HCT116 (cell line): ENCODE measurements at regions of chr10 and their contacts with region 1.

Region 1: DNA sequence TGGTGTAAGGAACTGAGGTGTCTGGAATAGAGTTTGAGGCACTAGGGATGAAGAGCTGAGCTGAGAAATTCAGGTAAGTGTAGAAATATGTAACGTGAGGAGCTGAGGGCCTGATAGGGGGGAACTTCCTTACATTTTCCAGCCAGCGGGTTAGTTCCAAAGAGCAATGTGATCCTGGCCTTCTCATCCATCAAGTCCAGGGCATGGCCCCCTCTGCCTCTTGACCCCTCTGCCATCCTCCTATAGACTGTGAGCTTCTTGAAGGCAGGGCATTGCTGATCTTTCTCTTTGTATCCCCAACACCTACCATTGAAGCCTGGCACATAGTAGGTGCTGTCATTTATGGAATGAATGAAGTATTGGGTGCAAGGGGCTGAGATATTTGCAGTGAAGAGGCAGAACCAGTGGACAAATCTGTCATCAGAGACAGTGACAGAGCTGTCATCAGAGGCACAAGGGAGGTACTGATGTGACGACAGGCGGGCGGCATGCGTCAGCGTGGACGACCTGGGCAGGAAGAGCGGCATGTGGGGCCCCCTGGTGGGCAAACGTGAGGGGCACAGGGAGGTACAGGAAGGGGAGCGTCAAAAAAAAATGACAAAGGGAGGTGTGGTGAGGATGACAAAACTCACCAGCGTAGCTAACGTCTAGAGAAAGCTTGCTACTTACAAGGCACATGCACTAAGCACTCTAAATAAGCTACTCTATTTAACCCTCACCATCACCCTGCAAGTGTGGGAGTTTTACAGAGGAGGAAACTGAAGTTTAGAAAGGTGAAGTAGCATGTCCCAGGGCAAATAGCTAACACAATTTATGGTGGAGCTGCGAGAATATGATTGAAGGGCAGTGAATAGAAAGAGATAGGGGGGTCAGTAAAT is 5.2 kb upstream of the CAMK2G start:
- DNase-seq: peak; percentile 81
- ATAC-seq: peak; percentile 90
- H3K4me3 ChIP-seq: no peak overlapping the region
- H3K27ac ChIP-seq: no peak overlapping the region
- H3K4me1 ChIP-seq: peaks cover 29 to 53% of the 10 kb centered on the region in 2 experiments
- H3K27me3 ChIP-seq: no peaks in the 10 kb centered on the region
- CTCF ChIP-seq: peak in 2 of 3 experiments; percentile 93 to 97; a peak in 4 of 6 replicates
- POLR2A ChIP-seq: no peak
- RAD21 ChIP-seq: no peak

Region 2: DNA sequence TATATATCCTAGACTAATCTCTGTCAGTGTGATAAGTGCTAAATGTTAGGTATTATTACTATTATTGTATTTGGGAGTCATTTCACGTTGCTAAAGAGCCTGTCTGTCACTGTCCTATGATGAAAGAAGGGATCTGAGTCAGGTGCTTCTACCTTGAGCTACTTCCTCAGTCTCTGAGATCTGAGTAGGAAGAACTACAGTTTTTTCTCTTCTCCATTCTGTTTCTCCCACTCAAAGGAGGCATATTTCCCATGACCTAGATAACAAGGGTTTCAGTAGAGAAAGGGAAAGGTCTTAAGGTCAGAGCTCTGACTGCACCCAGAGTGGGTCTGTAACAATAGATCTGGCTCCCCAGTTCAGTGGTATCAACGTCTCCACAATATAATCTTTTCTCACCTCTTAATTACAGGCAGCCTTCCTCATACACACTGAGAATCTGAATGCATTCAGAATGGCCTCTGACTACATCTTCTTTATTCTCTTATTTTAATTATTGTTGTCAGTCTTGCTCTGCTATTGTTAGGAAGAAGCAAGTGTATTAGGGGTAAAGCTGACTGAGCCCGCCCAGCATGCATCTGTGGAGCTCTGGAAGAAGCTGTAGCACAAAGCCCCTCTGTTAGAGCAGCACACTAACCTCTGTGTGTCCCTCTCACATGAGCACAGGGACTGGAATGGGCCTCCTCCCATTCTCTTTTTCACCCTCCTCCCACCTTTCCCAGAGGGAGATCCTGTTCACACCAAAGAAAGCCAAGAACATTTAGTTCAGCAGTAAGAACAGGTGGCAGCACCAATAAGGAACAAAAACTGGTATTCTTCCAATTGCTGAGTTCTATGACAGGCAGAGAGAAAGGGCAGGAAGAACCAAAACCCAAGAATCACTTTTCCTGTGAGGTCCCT is 326.5 kb before region 1 on chr10:
- CTCF ChIA-PET with region 1: no interaction called
- POLR2A ChIA-PET with region 1: no interaction called
- RAD21 ChIA-PET with region 1: no interaction called
- intact Hi-C with region 1: no loop called
- DNase-seq: no peak
- ATAC-seq: no peak
- H3K4me3 ChIP-seq: no peak overlapping the region
- H3K27ac ChIP-seq: no peak overlapping the region
- H3K4me1 ChIP-seq: no peaks in the 10 kb centered on the region; a peak in 1 of 4 replicates
- H3K27me3 ChIP-seq: no peaks in the 10 kb centered on the region
- CTCF ChIP-seq: no peak
- POLR2A ChIP-seq: no peak
- RAD21 ChIP-seq: no peak

Region 3: DNA sequence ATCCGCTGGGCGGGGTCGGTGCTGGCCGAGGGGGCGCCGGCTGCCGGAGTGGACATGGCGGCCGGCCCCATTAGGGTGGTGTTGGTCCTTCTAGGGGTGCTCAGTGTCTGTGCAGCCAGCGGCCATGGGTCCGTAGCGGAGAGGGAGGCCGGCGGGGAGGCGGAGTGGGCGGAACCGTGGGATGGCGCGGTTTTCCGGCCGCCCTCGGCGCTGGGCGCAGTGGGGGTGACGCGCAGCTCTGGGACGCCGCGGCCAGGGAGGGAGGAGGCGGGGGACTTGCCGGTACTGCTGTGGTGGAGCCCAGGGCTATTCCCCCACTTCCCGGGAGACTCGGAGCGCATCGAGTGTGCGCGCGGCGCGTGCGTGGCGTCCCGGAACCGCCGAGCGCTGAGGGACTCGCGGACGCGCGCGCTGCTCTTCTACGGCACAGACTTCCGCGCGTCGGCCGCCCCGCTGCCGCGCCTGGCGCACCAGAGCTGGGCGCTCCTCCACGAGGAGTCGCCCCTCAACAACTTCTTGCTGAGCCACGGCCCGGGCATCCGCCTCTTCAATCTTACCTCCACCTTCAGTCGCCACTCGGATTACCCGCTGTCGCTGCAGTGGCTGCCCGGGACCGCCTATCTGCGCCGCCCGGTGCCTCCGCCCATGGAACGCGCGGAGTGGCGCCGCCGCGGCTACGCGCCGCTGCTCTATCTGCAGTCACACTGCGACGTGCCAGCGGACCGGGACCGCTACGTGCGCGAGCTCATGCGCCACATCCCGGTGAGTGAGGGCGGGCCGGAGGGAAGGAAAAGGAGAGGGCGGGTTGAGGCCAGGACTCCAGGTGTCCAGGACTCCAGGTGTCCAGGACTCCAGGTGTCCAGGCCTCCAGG is 107.0 kb before region 1 on chr10:
- CTCF ChIA-PET with region 1: interaction called, 7 read pairs
- POLR2A ChIA-PET with region 1: interaction called, 3 read pairs
- RAD21 ChIA-PET with region 1: no interaction called
- intact Hi-C with region 1: loop called (anchors 5 kb)
- DNase-seq: peak; percentile 52
- ATAC-seq: peak; percentile 82
- H3K4me3 ChIP-seq: peak overlapping the region; percentile 66 to 83
- H3K27ac ChIP-seq: peak overlapping the region; percentile 97
- H3K4me1 ChIP-seq: peaks cover 9 to 25% of the 10 kb centered on the region in 2 experiments
- H3K27me3 ChIP-seq: no peaks in the 10 kb centered on the region
- CTCF ChIP-seq: no peak; a peak in 1 of 6 replicates
- POLR2A ChIP-seq: peak; percentile 49
- RAD21 ChIP-seq: 0 out of 2 replicates have a peak, but pooled peaks have one; percentile 24

Region 4: GRCh38 chr10:73848821-73849489 is 30.6 kb before region 1 on chr10:
- CTCF ChIA-PET with region 1: interaction called, 17 read pairs
- POLR2A ChIA-PET with region 1: interaction called, 4 read pairs
- RAD21 ChIA-PET with region 1: interaction called in 1 of 2 experiments, 4 read pairs
- intact Hi-C with region 1: loop called (anchors 1 kb)
- DNase-seq: peak; percentile 47
- ATAC-seq: peak; percentile 98
- H3K4me3 ChIP-seq: no peak overlapping the region
- H3K27ac ChIP-seq: no peak overlapping the region
- H3K4me1 ChIP-seq: no peaks in the 10 kb centered on the region
- H3K27me3 ChIP-seq: no peaks in the 10 kb centered on the region
- CTCF ChIP-seq: peak; percentile 90 to 99 (median 99)
- POLR2A ChIP-seq: no peak
- RAD21 ChIP-seq: peak; percentile 98

Region 5: DNA sequence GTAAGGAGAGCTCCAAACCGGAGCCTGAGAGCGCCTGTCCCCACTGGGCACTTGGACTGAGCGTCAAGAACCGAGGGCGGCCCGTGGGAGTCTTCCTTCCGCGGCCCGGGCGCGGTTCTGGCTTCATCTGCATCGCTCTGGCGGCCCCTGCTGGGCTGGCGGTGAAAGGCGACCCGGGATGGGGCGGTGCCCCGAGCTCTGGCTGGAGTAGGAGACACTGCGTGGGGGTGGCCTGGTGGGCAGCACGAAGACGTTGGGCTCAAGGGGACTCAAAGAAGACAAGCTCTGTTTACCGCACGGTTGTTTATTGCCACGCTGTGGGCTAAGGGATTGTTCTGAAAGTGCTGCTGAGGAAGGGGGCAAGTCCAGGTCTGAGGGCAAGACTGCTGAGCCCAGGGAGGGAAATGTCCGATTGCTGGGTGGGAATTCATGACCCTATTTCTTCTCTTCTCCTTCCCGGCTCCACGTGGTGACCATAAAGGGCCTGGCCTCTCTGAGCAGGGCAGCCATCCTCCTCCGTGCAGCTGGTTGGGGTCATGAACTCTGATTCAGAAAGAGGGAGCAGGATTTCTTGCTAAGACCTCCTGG is 61.2 kb after region 1 on chr10:
- CTCF ChIA-PET with region 1: interaction called, 142 read pairs
- POLR2A ChIA-PET with region 1: no interaction called
- RAD21 ChIA-PET with region 1: interaction called, 4 to 9 read pairs
- intact Hi-C with region 1: no loop called
- DNase-seq: peak; percentile 37
- ATAC-seq: peak; percentile 97
- H3K4me3 ChIP-seq: peak overlapping the region in 1 of 2 experiments; percentile 31; a peak in 2 of 4 replicates
- H3K27ac ChIP-seq: peak overlapping the region; percentile 7; the same call in 1 of the 2 replicates
- H3K4me1 ChIP-seq: peaks cover 11 to 43% of the 10 kb centered on the region in 2 experiments
- H3K27me3 ChIP-seq: no peaks in the 10 kb centered on the region
- CTCF ChIP-seq: peak; percentile 90 to 95 (median 93); a peak in 5 of 6 replicates
- POLR2A ChIP-seq: no peak
- RAD21 ChIP-seq: peak; percentile 100